ENCODE measurements at regions of chr9 and their contacts with region 1.

Region 1: DNA sequence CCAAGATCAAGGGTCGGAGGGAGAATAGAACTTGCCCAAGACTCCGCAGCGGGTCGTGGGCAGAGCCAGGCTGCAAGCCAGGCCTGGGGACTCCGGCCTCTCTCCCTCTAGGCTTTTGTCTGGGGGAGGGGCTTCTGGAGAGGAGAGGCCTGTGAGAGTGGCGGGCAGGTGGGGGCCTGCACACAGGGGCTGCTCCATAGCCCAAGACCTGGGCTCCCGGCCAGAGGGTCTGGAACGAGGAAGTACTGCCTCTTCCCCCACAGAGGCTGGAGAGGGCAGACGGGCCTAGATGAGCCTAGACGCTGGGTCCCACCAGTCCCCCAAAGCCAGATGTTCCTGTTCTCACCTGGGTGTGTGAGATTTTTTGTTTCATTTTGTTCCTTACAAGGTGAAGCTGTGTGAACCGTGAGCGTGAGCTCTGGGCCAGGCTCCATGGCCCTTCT is 5.2 kb upstream of the ST6GALNAC6 start:
- DNase-seq: peak in 1 of 9 donors; percentile 29
- ATAC-seq: peak; percentile 2
- H3K4me3 ChIP-seq: peak overlapping the region; percentile 72
- H3K4me3 Mint-ChIP-seq: peak overlapping the region; percentile 86 to 98 (median 94)
- H3K27ac ChIP-seq: peak overlapping the region; percentile 95
- H3K27ac Mint-ChIP-seq: peak overlapping the region; percentile 96 to 100 (median 99)
- H3K4me1 ChIP-seq: peaks cover 35 to 49% of the 10 kb centered on the region in 2 donors
- H3K4me1 Mint-ChIP-seq: peaks cover 38 to 68% (median 52%) of the 10 kb centered on the region in 7 donors
- H3K27me3 ChIP-seq: no peaks in the 10 kb centered on the region
- H3K27me3 Mint-ChIP-seq: no peaks in the 10 kb centered on the region

Region 2: DNA sequence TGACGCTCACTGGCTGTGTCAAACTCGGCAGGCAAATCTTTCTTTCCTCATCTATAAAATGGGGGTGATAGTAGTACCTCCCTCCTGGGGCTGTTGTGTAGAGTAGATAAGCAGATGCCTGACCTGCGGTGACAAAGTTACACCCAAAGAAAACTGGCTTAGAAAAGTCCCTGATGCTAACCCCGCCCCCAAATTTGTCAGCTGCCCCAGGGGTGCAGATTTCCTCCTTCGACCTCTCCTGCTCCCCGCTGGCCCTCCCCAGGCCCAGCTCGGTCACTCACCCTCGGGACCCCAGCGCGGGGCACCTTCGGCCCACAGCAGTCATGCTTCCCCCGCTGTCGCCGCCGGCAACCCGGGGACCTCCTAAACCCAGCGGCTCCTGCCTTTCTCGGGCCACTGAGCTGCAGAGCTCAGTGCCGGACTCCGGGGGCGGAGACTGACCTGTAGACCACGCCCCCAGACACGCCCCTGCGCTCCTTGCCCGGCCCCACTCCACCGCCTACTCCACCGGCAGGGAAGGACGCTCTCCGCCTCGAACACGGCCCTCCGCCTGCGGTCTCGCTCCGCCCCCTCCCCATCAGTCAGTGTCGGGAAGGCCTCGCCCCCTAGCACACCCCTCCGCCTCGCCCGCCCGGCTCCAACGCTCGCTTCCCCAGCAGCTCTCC is 133.5 kb before region 1 on chr9:
- CTCF ChIA-PET with region 1: interaction called, 3 read pairs
- POLR2A ChIA-PET with region 1: interaction called, 7 read pairs
- intact Hi-C with region 1: loop called in 1 of 2 experiments (anchors 1 kb)
- DNase-seq: peak; percentile 85 to 99 (median 92)
- ATAC-seq: peak; percentile 92
- H3K4me3 ChIP-seq: peak overlapping the region; percentile 71
- H3K4me3 Mint-ChIP-seq: peak overlapping the region; percentile 74 to 92 (median 86)
- H3K27ac ChIP-seq: peak overlapping the region; percentile 90
- H3K27ac Mint-ChIP-seq: peak overlapping the region; percentile 90 to 96 (median 94)
- H3K4me1 ChIP-seq: peaks cover 57 to 59% of the 10 kb centered on the region in 2 donors
- H3K4me1 Mint-ChIP-seq: peaks cover 44 to 82% (median 71%) of the 10 kb centered on the region in 7 donors
- H3K27me3 ChIP-seq: no peaks in the 10 kb centered on the region
- H3K27me3 Mint-ChIP-seq: no peaks in the 10 kb centered on the region

Region 3: DNA sequence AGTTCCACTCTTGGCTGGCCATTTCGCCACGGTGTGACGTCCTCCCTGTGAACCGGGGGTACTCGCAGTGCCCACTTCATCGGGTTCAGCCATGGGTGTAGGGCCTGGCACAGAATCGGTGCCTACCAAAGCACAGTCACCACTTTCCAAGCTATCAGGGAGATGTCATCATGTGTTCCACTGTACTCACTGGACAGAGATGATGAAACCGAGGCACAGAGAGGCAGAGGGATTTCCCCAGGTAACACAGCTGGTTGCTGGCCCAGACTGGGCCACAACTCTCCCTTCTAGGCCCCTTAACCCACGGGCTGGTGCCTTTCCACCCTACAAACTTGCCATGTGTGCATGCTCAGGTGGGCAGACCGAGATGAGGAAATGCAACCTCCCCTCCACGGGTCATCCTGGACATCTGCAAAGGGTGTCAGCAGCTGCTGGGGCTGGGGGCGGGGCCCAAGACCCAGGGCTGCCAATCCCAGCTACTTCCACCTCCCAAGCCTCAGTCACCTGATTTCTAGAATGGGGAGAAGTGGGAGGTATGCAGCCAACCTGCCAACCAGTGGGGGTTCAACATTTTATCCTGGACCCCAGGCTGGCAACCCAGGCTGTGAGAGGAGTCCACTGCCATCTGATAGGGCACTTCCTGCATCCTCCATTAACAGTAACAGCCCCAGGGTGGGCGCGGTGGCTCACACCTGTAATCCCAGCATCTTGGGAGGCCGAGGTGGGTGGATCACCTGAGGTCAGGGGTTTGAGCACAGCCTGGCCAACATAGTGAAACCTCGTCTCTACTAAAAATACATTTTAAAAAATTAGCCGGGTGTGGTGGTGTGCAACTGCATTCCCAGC is 125.2 kb before region 1 on chr9:
- CTCF ChIA-PET with region 1: no interaction called
- POLR2A ChIA-PET with region 1: interaction called, 41 read pairs
- intact Hi-C with region 1: loop called in 1 of 2 experiments (anchors 1 kb)
- DNase-seq: peak in 1 of 9 donors; percentile 64
- ATAC-seq: peak; percentile 39
- H3K4me3 ChIP-seq: peak overlapping the region; percentile 97
- H3K4me3 Mint-ChIP-seq: peak overlapping the region; percentile 94 to 100 (median 98)
- H3K27ac ChIP-seq: peak overlapping the region; percentile 88
- H3K27ac Mint-ChIP-seq: peak overlapping the region; percentile 88 to 98 (median 94)
- H3K4me1 ChIP-seq: peaks cover 51 to 59% of the 10 kb centered on the region in 2 donors
- H3K4me1 Mint-ChIP-seq: peaks cover 32 to 76% (median 60%) of the 10 kb centered on the region in 7 donors
- H3K27me3 ChIP-seq: no peaks in the 10 kb centered on the region
- H3K27me3 Mint-ChIP-seq: no peaks in the 10 kb centered on the region

Region 4: DNA sequence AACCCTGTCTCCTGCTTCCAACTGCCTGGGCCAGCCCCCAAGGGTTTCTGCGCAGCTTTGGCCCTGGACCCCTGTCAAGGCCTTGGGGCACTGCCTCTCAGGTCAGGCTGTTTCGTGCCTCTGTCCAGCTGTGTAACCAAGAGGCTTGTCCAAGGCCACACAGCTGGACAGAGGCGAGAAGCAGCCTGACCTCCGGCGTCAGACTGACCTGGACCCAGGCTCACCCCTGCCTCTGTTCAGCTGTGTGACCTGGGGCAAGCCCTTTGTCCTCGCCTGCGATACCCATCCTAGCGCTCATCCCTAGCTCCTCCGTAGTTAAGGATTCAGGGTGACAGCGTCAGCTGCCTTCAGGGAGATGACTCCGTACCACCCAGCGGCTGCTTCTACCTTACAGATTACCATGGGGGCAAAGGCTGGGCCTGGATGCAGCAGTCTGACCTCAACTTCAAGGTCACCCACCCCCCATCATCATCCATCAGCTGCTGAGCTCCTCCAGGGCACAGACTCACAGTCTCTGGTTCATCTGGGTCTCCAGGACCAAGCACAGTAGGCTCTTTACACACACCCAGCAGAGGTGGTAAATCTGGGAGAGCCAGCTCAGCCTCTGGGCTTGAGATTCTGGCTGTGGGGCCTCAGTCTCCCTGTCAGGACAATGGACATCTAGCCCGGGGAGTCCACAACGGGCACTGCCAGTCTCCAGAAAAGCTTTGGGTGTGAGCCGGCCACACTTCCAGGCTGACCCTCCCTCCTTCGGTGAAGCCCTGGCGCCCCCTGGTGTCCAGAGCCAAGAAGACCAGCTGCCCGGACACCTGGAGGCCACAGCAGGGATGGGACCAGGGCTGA is 35.1 kb before region 1 on chr9:
- CTCF ChIA-PET with region 1: interaction called, 10 read pairs
- POLR2A ChIA-PET with region 1: interaction called, 9 read pairs
- intact Hi-C with region 1: loop called in 1 of 2 experiments (anchors 5 kb)
- DNase-seq: peak; percentile 44 to 91 (median 62)
- ATAC-seq: peak; percentile 85
- H3K4me3 ChIP-seq: no peak overlapping the region
- H3K4me3 Mint-ChIP-seq: no peak overlapping the region
- H3K27ac ChIP-seq: no peak overlapping the region
- H3K27ac Mint-ChIP-seq: peak overlapping the region in 1 of 9 donors; percentile 32
- H3K4me1 ChIP-seq: peaks cover 12 to 13% of the 10 kb centered on the region in 2 donors
- H3K4me1 Mint-ChIP-seq: peaks cover 12 to 19% (median 16%) of the 10 kb centered on the region in 7 donors
- H3K27me3 ChIP-seq: no peaks in the 10 kb centered on the region
- H3K27me3 Mint-ChIP-seq: no peaks in the 10 kb centered on the region

Region 5: GRCh38 chr9:128191406-128192046 is 286.9 kb after region 1 on chr9 and contains the start of gene CIZ1:
- CTCF ChIA-PET with region 1: no interaction called
- POLR2A ChIA-PET with region 1: no interaction called
- intact Hi-C with region 1: no loop called
- DNase-seq: peak; percentile 51 to 86 (median 69)
- ATAC-seq: peak; percentile 95
- H3K4me3 ChIP-seq: peak within 1 kb of the TSS; percentile 76
- H3K4me3 Mint-ChIP-seq: peak within 1 kb of the TSS; percentile 92 to 99 (median 96)
- H3K27ac ChIP-seq: peak within 1 kb of the TSS; percentile 89
- H3K27ac Mint-ChIP-seq: peak within 1 kb of the TSS; percentile 84 to 93 (median 90)
- H3K4me1 ChIP-seq: peaks cover 12 to 16% of the 10 kb centered on the region in 2 donors
- H3K4me1 Mint-ChIP-seq: peaks cover 13 to 39% (median 31%) of the 10 kb centered on the region in 7 donors
- H3K27me3 ChIP-seq: no peaks in the 10 kb centered on the region
- H3K27me3 Mint-ChIP-seq: peaks cover 0 to 13% (median 0%) of the 10 kb centered on the region in 5 donors
- total RNA-seq, gene CIZ1: 110 to 163 (median 142) TPM

Measured in naive thymus-derived CD4-positive, alpha-beta T cell (primary cell).